ENCODE measurements at regions of chr3 and their contacts with region 1.

Region 1: DNA sequence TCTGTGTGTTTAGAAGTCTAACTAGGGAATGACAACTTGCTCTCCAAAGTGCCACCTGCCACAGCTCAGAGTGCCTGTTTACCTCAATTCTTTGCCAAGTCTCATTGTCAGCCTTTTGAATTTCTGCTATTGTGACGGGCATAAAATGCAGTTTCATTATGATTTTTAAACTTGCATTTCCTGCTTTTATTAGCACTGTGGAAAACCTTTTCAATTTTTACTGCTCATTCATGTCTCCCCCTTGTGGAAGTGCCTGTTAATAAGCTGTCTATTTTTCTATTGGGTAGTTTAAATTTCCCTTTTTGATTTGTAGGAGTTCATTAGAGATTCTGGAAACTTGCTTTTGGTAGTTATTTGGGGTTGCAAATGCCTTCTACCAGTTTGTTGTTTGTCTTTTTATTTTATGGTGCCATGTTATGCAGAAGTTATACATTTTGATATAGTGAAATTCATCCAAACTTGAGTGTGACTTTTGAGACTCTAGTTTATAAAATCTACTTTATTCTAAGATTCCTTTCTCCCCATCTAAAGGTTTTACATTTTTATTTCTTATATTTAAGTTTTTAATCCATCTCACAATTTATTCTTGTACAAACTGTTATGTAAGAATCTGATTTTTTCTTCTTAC is 53.9 kb upstream of the FRMD4B start:
- DNase-seq: no peak
- ATAC-seq: peak; percentile 43

Region 2: GRCh38 chr3:69539134-69539533 is 99.4 kb after region 1 on chr3:
- intact Hi-C with region 1: loop called (anchors 5 kb)
- DNase-seq: no peak
- ATAC-seq: no peak